WTC11 (cell line): ENCODE measurements at regions of chr3 and their contacts with region 1.

Region 1: GRCh38 chr3:177359593-177360357 is 162.5 kb upstream of the TBL1XR1 start:
- DNase-seq: peak; percentile 96
- ATAC-seq: peak; percentile 77
- H3K4me3 Mint-ChIP-seq: peak overlapping the region; percentile 68
- H3K27ac Mint-ChIP-seq: peak overlapping the region; percentile 98
- H3K4me1 Mint-ChIP-seq: peaks cover 52% of the 10 kb centered on the region
- H3K27me3 Mint-ChIP-seq: peaks cover 24% of the 10 kb centered on the region
- CTCF ChIP-seq: no peak

Region 2: GRCh38 chr3:177197041-177197727 is 162.6 kb before region 1 on chr3 and contains the start of gene TBL1XR1:
- CTCF ChIA-PET with region 1: interaction called, 11 read pairs
- POLR2A ChIA-PET with region 1: interaction called, 78 read pairs
- DNase-seq: peak; percentile 82
- ATAC-seq: peak; percentile 54
- H3K4me3 Mint-ChIP-seq: peak within 1 kb of the TSS; percentile 93
- H3K27ac Mint-ChIP-seq: peak within 1 kb of the TSS; percentile 98
- H3K4me1 Mint-ChIP-seq: peaks cover 54% of the 10 kb centered on the region
- H3K27me3 Mint-ChIP-seq: no peaks in the 10 kb centered on the region; the same call in 1 of the 2 replicates
- CTCF ChIP-seq: no peak
- total RNA-seq, gene TBL1XR1: 133 to 148 TPM (median 139 TPM) in 3 replicates